Activated CD8-positive, alpha-beta T cell treated with anti-CD3 and anti-CD28 coated beads for 36 hours (primary cell): ENCODE measurements at regions of chr9 and their contacts with region 1.

Region 1: GRCh38 chr9:94213511-94214124 is 45.5 kb upstream of the ZNF169 start:
- DNase-seq: peak; percentile 82
- ATAC-seq: peak; percentile 99
- H3K4me3 Mint-ChIP-seq: peak overlapping the region; percentile 14
- H3K27ac Mint-ChIP-seq: no peak overlapping the region
- H3K4me1 Mint-ChIP-seq: peaks cover 3% of the 10 kb centered on the region
- H3K27me3 Mint-ChIP-seq: peaks cover 12% of the 10 kb centered on the region
- CTCF ChIP-seq: peak; percentile 89

Region 2: DNA sequence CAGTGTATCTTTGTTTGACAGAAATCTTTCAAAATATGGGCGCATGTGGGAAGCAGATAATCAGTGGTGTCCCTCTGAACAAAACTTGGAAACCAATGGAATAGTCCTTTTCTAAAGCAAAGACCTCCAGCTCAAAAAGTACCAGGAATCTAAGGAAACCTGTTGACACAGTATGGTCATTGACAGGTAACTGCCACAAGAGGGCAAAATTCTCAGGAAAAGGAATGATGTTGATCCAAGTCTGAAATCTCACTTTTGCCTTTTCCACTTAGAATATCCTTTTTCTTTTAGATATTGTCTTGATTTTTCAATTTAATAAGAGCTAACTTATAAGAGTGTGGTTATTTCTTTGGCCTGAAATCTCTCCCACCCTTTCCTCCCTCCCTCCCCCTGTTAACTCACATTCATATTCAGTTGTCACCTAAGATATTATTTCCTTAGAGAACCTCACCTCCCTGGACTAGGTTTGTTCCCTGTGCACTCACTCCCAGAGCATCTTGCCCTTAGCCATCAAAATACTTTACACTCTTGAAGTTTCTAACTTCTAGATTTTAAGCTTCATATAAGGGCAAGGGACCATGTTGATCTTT is 199.5 kb before region 1 on chr9:
- CTCF ChIA-PET with region 1: interaction called, 40 read pairs
- POLR2A ChIA-PET with region 1: no interaction called
- intact Hi-C with region 1: no loop called
- DNase-seq: no peak
- ATAC-seq: no peak
- H3K4me3 Mint-ChIP-seq: no peak overlapping the region
- H3K27ac Mint-ChIP-seq: no peak overlapping the region
- H3K4me1 Mint-ChIP-seq: peaks cover 12% of the 10 kb centered on the region
- H3K27me3 Mint-ChIP-seq: no peaks in the 10 kb centered on the region
- CTCF ChIP-seq: peak; percentile 64

Region 3: GRCh38 chr9:94065535-94065961 is 148.1 kb before region 1 on chr9:
- CTCF ChIA-PET with region 1: interaction called, 178 read pairs
- POLR2A ChIA-PET with region 1: no interaction called
- intact Hi-C with region 1: loop called (anchors 1 kb)
- DNase-seq: peak; percentile 88
- ATAC-seq: peak; percentile 62
- H3K4me3 Mint-ChIP-seq: no peak overlapping the region
- H3K27ac Mint-ChIP-seq: no peak overlapping the region
- H3K4me1 Mint-ChIP-seq: peaks cover 4% of the 10 kb centered on the region
- H3K27me3 Mint-ChIP-seq: no peaks in the 10 kb centered on the region
- CTCF ChIP-seq: peak; percentile 92

Region 4: DNA sequence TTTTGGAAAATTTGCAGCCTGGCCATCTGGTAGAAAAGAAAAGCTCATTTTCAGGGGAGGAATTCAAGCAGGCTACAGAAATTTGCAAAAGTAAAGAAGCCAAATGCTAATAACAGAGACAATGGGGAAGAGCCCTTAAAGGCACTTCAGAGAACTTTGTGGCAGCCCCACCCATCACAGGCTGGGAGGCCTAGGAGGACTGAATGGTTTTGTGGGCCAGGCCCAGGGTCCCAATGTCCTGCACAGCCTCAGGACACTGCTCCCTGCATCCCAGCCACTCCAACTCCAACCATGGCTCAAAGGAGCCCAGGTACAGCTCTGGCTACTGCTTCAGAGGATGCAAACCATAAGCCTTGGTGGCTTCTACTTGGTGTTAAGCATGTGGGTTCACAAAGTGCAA is 85.0 kb before region 1 on chr9:
- CTCF ChIA-PET with region 1: no interaction called
- POLR2A ChIA-PET with region 1: no interaction called
- intact Hi-C with region 1: no loop called
- DNase-seq: no peak
- ATAC-seq: no peak
- H3K4me3 Mint-ChIP-seq: no peak overlapping the region
- H3K27ac Mint-ChIP-seq: no peak overlapping the region
- H3K4me1 Mint-ChIP-seq: no peaks in the 10 kb centered on the region
- H3K27me3 Mint-ChIP-seq: no peaks in the 10 kb centered on the region
- CTCF ChIP-seq: no peak

Region 5: GRCh38 chr9:94188246-94188645 is 25.4 kb before region 1 on chr9:
- CTCF ChIA-PET with region 1: interaction called, 11 read pairs
- POLR2A ChIA-PET with region 1: no interaction called
- intact Hi-C with region 1: no loop called
- DNase-seq: no peak
- ATAC-seq: no peak
- H3K4me3 Mint-ChIP-seq: no peak overlapping the region
- H3K27ac Mint-ChIP-seq: no peak overlapping the region
- H3K4me1 Mint-ChIP-seq: peaks cover 3% of the 10 kb centered on the region
- H3K27me3 Mint-ChIP-seq: no peaks in the 10 kb centered on the region
- CTCF ChIP-seq: no peak

Region 6: DNA sequence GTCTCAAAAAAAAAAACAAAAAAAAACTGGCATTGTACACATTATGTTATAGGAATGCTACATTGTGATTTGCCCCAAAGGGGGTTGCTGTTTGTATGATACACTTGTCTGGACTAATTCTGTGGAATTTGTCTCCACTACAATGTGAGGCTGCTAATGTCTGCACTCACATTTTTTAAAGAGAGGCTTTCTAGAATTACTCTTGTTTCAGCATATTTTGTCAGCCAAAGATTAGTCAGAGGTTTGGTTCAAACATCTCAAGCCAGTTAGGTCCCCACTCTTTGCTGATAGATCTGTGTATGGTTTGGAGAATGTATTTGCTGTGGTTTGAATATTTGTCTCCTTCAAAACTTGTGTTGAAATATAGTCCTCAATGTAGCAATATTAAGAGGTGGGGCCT is 13.8 kb before region 1 on chr9:
- CTCF ChIA-PET with region 1: interaction called, 11 read pairs
- POLR2A ChIA-PET with region 1: no interaction called
- intact Hi-C with region 1: no loop called
- DNase-seq: no peak
- ATAC-seq: no peak
- H3K4me3 Mint-ChIP-seq: no peak overlapping the region
- H3K27ac Mint-ChIP-seq: no peak overlapping the region
- H3K4me1 Mint-ChIP-seq: no peaks in the 10 kb centered on the region
- H3K27me3 Mint-ChIP-seq: no peaks in the 10 kb centered on the region
- CTCF ChIP-seq: no peak

Region 7: DNA sequence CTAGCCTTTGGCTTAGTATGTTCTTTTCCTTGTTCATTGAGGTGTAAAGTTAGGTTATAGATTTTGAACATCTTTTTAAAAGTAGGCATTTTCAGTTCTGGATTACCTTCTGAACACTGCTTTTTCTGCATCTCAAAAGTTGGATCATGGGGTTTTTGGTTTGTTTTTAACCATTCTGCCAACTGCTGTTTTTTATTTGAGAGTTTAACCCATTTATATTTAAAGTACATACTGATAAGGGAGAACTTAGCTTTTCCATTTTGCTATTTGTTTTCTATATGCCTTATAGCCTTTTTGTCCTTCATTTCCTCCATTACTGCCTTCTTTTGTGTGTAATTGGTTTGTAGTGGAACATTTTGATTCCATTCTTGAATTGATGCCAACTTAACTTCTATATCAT is 15.0 kb after region 1 on chr9:
- CTCF ChIA-PET with region 1: interaction called, 14 read pairs
- POLR2A ChIA-PET with region 1: no interaction called
- intact Hi-C with region 1: no loop called
- DNase-seq: no peak
- ATAC-seq: no peak
- H3K4me3 Mint-ChIP-seq: no peak overlapping the region
- H3K27ac Mint-ChIP-seq: no peak overlapping the region
- H3K4me1 Mint-ChIP-seq: no peaks in the 10 kb centered on the region
- H3K27me3 Mint-ChIP-seq: peaks cover 20% of the 10 kb centered on the region
- CTCF ChIP-seq: no peak